ENCODE measurements at regions of chr6 and their contacts with region 1.

Region 1: DNA sequence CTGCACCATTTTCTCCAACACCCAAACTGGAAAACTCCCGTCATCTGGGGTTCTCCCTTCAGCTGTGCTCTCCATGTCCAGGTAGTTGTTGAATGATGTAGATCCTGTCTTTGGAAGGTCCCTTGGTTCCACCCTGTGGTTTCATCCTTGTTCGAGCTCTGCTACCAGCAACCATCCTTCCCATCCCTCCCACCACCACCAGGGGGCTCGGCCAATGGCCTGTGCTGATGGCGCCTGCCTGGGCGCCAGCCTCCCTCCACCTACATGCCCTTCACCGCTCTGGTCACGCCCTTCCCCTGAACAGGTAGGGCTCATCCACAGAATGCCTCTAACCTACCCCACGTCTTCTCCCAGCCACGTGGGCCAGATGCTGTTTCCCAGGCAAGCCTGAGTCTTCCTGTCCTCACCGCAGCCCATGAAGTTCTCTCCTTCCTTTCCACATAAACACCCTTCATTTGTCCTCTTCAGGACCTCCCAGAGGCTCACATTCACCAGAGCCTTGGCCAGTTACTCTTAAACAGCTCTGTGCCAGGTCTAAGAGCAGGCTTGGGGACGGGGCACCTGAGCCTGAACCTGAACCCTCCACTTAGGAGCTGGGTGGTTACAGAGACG is 75.1 kb upstream of the DUSP22 start:
- DNase-seq: peak; percentile 75 to 83 (median 78)
- ATAC-seq: peak; percentile 94
- H3K4me3 ChIP-seq: no peak overlapping the region
- H3K27ac ChIP-seq: no peak overlapping the region
- H3K4me1 ChIP-seq: peaks cover 9 to 11% of the 10 kb centered on the region in 2 experiments; a peak in 4 of 5 replicates
- H3K27me3 ChIP-seq: peaks cover 15 to 38% of the 10 kb centered on the region in 2 experiments
- CTCF ChIP-seq: peak; percentile 83 to 95 (median 91)
- EP300 ChIP-seq: no peak
- POLR2A ChIP-seq: no peak
- RAD21 ChIP-seq: peak; percentile 54 to 80

Region 2: DNA sequence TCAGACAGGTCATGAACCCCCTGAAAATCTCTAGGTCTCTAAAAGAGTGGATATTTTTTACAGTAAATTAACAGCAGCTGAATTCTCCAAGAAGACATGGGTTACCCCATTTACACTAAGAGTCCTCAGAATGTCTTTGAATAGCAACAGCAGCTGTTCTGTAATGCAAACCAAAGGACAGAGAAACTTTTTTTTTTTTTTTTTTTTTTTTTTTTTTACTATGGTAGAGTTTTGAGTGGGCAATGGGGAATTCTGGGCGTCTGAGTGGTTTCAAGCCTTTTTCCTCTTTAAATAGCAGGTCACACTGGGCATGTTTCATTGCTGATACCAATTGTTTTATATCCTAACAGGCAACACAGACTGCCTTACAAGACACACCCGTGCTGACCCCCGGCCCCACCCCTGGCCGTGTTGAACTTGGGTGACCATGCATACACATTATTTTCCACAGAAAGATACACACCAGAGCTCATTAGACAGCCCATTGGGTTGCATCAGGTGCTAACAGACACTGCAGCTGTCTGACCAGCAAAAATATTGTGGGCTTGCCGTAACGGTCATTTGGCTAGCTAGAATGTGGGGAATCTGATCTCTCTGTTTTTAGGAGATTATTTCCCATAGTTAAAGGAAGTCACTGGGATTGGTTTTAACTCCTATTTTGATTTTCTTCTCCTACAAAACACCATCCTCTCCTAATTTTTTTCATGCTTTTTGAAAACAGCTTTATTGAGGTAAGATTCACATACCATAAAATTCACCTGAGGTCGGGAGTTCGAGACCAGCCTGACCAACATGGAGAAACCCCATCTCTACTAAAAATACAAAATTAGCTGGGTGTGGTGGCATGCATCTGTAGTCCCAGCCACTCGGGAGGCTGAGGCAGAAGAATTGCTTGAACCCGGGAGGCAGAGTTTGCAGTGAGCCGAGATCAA is 147.7 kb after region 1 on chr6:
- CTCF ChIA-PET with region 1: no interaction called
- POLR2A ChIA-PET with region 1: no interaction called
- in situ Hi-C with region 1: no loop called
- intact Hi-C with region 1: loop called (anchors 5 kb)
- DNase-seq: no peak
- ATAC-seq: no peak
- H3K4me3 ChIP-seq: no peak overlapping the region
- H3K27ac ChIP-seq: no peak overlapping the region
- H3K4me1 ChIP-seq: no peaks in the 10 kb centered on the region
- H3K27me3 ChIP-seq: peaks cover 71 to 87% of the 10 kb centered on the region in 2 experiments
- CTCF ChIP-seq: no peak
- EP300 ChIP-seq: no peak
- POLR2A ChIP-seq: no peak
- RAD21 ChIP-seq: no peak

Region 3: DNA sequence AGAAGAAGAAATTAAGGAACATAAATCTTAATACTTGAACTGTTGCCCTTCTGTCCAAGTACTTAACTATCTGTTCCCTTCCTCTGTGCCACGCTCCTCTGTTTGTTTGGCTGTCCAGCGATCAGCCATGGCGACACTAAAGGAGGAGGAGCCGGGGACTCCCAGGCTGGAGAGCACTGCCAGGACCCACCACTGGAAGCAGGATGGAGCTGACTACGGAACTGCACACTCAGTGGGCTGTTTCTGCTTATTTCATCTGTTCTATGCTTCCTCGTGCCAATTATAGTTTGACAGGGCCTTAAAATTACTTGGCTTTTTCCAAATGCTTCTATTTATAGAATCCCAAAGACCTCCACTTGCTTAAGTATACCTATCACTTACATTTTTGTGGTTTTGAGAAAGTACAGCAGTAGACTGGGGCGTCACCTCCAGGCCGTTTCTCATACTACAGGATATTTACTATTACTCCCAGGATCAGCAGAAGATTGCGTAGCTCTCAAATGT is 191.5 kb after region 1 on chr6:
- CTCF ChIA-PET with region 1: interaction called, 14 read pairs
- POLR2A ChIA-PET with region 1: interaction called, 3 read pairs
- in situ Hi-C with region 1: loop called (anchors 10 kb)
- intact Hi-C with region 1: loop called (anchors 2 kb)
- DNase-seq: peak; percentile 65 to 74 (median 70)
- ATAC-seq: peak; percentile 100
- H3K4me3 ChIP-seq: no peak overlapping the region
- H3K27ac ChIP-seq: no peak overlapping the region
- H3K4me1 ChIP-seq: peaks cover 0 to 2% of the 10 kb centered on the region in 2 experiments; a peak in 2 of 5 replicates
- H3K27me3 ChIP-seq: peaks cover 36 to 44% of the 10 kb centered on the region in 2 experiments
- CTCF ChIP-seq: peak; percentile 73 to 86 (median 82)
- EP300 ChIP-seq: no peak
- POLR2A ChIP-seq: no peak
- RAD21 ChIP-seq: peak; percentile 82 to 89